OCI-LY7 (cell line): ENCODE measurements at regions of chr3 and their contacts with region 1.

Region 1: DNA sequence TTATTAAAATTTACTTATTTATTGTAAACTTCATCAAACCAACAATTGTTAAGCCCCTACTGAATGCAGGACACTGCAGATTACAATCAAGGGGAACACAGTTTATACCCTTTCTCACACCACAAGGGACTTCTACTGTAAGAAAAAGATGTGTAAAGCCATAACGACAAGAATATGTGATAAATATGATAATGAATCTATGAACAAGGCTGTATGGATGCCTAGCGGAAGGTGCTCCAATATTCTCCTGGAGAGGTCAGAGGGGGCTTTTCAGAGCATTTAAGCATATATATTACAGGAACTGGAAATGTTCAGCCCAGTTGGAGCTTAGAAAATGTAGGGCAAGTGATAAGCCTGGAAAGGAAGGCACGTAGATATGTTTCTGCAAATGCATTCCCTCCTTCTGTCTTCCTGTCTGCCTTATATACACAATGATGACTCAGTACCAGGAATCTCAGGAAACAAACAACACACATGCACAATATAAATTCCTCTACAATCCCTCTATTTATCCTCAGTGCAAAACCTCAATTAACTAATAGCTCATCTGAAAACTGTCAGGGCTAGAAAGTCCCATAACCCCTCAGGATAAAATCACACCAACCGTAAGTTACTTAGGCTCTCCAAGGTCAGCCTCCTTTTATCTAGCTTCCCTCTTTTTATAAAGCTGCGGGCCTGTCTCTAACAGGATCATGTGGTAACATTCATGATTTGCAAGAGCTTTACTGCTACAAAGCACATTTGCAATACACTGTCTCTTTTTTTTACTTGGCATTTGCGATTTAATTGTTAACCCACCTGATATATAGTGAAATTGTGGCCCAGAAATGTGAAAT is 393.1 kb downstream of the LPP start:
- DNase-seq: no peak
- H3K4me3 ChIP-seq: no peak overlapping the region
- H3K27ac ChIP-seq: no peak overlapping the region
- H3K4me1 ChIP-seq: no peaks in the 10 kb centered on the region
- CTCF ChIP-seq: no peak

Region 2: GRCh38 chr3:188362405-188362831 is 184.6 kb before region 1 on chr3:
- CTCF ChIA-PET with region 1: no interaction called
- POLR2A ChIA-PET with region 1: no interaction called
- intact Hi-C with region 1: no loop called
- DNase-seq: no peak
- H3K4me3 ChIP-seq: no peak overlapping the region
- H3K27ac ChIP-seq: no peak overlapping the region
- H3K4me1 ChIP-seq: peaks cover 27% of the 10 kb centered on the region
- CTCF ChIP-seq: no peak

Region 3: GRCh38 chr3:188522115-188522514 is 24.9 kb before region 1 on chr3:
- CTCF ChIA-PET with region 1: no interaction called
- POLR2A ChIA-PET with region 1: no interaction called
- intact Hi-C with region 1: no loop called
- DNase-seq: no peak
- H3K4me3 ChIP-seq: no peak overlapping the region
- H3K27ac ChIP-seq: no peak overlapping the region
- H3K4me1 ChIP-seq: no peaks in the 10 kb centered on the region
- CTCF ChIP-seq: no peak

Region 4: DNA sequence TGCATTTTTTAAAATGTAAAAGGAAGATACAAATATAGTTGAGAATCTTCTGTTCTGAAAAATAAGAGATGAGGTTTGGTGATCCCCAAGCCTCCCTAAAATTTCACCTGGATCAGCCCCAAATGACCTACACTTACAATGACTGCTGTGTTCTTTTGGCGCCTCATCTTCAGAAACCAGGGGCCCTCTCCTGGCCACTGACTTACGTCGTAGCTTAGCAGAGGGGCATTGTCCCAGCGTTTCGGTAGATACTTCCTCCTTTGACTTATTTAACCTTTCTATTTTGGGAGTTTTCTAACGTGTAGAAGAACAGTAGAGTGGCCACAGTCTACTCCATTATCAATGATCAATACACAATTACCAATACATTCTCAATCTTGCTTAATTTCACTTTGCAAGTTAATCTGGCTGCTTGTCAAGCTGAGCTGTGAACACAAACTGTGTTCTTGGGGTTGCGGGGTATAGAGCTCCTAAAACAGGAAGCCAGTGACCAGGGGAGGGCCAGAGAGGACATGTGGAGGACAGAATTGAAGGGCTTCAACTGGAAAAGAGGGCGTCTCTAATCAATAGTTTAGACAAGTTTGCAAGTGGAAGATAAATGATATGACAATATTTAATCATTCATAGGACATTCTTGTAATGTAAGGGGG is 26.4 kb after region 1 on chr3:
- CTCF ChIA-PET with region 1: no interaction called
- POLR2A ChIA-PET with region 1: interaction called, 3 read pairs
- intact Hi-C with region 1: loop called (anchors 1 kb)
- DNase-seq: peak; percentile 46
- H3K4me3 ChIP-seq: no peak overlapping the region
- H3K27ac ChIP-seq: no peak overlapping the region
- H3K4me1 ChIP-seq: peaks cover 24% of the 10 kb centered on the region
- CTCF ChIP-seq: peak; percentile 66